Activated T-helper 1 cell treated with anti-CD3 and anti-CD28 coated beads, Interleukin-12 subunit alpha, Interleukin-12 subunit beta, Interleukin-2, Interleukin-4 antibody, amounts not matched to agents 30 ng/mL and 10 ng/mL and 1 ng/mL, durations not matched to agents 14 hours and 24 hours and 36 hours (primary cell): ENCODE measurements at regions of chr4 and their contacts with region 1.

Region 1: GRCh38 chr4:75724066-75724866 is at the start of gene USO1:
- DNase-seq: peak; percentile 100
- H3K4me3 Mint-ChIP-seq: peak within 1 kb of the TSS; percentile 96
- H3K27ac Mint-ChIP-seq: peak within 1 kb of the TSS; percentile 97
- H3K4me1 Mint-ChIP-seq: peaks cover 57% of the 10 kb centered on the region
- H3K27me3 Mint-ChIP-seq: no peaks in the 10 kb centered on the region
- total RNA-seq, gene USO1: 44.5 and 48.6 TPM in 2 replicates

Region 2: DNA sequence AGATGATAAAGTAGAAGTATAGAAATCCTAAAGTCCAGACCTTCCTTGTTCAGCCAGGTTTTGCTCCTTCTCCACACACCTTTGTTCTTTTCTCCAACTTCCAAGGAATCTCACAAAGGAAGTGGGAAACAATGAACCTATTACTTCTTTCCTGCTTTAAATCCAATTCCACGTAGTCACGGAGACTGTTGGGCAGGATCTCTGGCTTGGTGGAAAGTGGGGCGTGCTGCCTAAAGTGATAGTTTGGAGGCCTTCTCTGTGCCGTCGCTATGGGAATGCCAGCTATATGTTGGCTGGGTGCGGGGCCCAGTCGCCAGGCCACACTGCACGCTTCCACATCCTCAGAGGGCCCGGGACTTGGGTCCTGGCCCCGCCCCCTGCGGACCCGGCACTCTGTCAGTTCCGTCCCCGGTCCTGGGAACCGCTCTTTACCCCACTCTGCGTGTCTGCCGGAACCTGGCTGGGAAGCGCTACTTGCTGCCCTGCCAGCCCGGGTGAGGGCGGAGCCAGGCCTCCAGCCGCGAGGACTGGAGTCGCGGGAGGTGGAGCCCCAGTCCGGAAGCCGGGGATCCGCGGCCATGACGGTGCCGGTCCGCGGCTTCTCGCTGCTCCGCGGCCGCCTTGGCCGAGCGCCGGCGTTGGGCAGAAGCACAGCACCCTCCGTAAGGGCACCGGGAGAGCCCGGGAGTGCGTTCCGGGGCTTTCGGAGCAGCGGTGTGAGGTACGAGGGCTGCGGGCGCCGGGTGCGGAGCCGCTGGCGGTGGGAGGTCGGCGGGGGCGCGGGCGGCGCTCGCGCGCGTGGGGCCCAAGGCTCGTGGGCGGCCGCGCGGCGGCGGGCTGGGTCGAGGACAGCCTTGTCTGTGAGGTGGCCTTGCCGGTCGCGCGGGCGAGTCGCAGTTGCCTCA is 1566.5 kb before region 1 on chr4 and contains the start of gene MTHFD2L:
- intact Hi-C with region 1: loop called (anchors 10 kb)
- DNase-seq: peak; percentile 80
- H3K4me3 Mint-ChIP-seq: peak within 1 kb of the TSS; percentile 93
- H3K27ac Mint-ChIP-seq: peak within 1 kb of the TSS; percentile 87
- H3K4me1 Mint-ChIP-seq: peaks cover 30% of the 10 kb centered on the region
- H3K27me3 Mint-ChIP-seq: peaks cover 22% of the 10 kb centered on the region
- total RNA-seq, gene MTHFD2L: 8.9 and 9.9 TPM in 2 replicates

Region 3: DNA sequence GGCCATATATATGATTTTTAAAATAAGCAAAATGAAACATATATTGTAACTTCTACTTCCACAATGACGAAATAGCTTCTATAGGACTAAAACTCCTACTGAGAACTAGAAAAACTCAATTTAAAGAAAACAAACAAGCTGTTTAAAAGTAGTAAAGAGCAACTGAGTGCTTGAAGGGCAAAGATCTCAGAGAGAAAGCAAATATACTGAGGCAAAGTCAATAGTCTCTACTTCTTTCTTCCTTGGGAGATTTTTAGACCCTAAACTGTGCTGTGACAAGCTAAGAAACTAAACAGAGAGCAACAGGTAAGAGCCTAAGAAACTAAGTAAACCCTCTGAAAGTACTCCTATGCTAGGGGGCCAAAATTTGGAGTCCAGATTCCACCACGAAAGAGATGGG is 218.6 kb before region 1 on chr4:
- intact Hi-C with region 1: no loop called
- DNase-seq: no peak
- H3K4me3 Mint-ChIP-seq: no peak overlapping the region
- H3K27ac Mint-ChIP-seq: no peak overlapping the region
- H3K4me1 Mint-ChIP-seq: peaks cover 25% of the 10 kb centered on the region
- H3K27me3 Mint-ChIP-seq: no peaks in the 10 kb centered on the region

Region 4: DNA sequence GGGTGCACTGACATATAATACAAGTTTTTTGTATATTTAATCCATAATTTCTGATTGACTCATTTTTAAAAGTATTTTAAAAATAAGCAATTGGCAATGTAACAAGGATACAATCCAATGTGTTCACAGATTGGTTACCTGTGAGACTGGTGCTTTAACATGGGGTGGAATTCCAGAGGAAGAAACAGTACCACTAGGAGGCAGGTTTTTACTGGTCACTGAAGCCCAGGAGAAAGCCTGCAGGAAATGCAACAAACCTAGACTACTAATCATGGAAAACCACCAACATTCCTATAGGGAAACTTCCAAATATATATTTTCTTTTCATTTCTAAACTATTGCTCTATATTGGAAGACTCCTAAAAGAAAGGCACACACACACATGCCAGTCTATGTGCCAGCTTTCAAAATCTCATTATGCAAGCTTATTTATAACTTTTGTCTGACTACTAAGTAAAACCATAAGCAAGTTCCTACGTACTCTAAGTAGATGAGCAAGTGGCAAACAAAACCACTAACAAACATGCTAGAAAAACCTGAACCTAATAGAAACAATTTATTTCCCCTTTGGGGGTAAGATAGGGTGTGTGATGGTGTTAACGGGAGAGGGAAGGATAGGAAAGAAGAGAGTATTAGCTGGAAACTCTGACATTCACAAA is 70.3 kb before region 1 on chr4:
- intact Hi-C with region 1: loop called (anchors 1 kb)
- DNase-seq: no peak
- H3K4me3 Mint-ChIP-seq: peak overlapping the region; percentile 41
- H3K27ac Mint-ChIP-seq: peak overlapping the region; percentile 93
- H3K4me1 Mint-ChIP-seq: peaks cover 50% of the 10 kb centered on the region
- H3K27me3 Mint-ChIP-seq: no peaks in the 10 kb centered on the region

Region 5: GRCh38 chr4:75666299-75666698 is 58.0 kb before region 1 on chr4:
- intact Hi-C with region 1: no loop called
- DNase-seq: no peak
- H3K4me3 Mint-ChIP-seq: peak overlapping the region; percentile 22
- H3K27ac Mint-ChIP-seq: no peak overlapping the region
- H3K4me1 Mint-ChIP-seq: peaks cover 71% of the 10 kb centered on the region
- H3K27me3 Mint-ChIP-seq: no peaks in the 10 kb centered on the region

Region 6: GRCh38 chr4:75708218-75708691 is 16.0 kb before region 1 on chr4:
- intact Hi-C with region 1: loop called (anchors 1 kb)
- DNase-seq: peak; percentile 38
- H3K4me3 Mint-ChIP-seq: no peak overlapping the region
- H3K27ac Mint-ChIP-seq: no peak overlapping the region
- H3K4me1 Mint-ChIP-seq: peaks cover 8% of the 10 kb centered on the region
- H3K27me3 Mint-ChIP-seq: no peaks in the 10 kb centered on the region

Region 7: GRCh38 chr4:75989846-75990528 is 265.7 kb after region 1 on chr4:
- intact Hi-C with region 1: loop called (anchors 2 kb)
- DNase-seq: no peak
- H3K4me3 Mint-ChIP-seq: peak overlapping the region; percentile 93
- H3K27ac Mint-ChIP-seq: peak overlapping the region; percentile 83
- H3K4me1 Mint-ChIP-seq: peaks cover 27% of the 10 kb centered on the region
- H3K27me3 Mint-ChIP-seq: no peaks in the 10 kb centered on the region

Region 8: DNA sequence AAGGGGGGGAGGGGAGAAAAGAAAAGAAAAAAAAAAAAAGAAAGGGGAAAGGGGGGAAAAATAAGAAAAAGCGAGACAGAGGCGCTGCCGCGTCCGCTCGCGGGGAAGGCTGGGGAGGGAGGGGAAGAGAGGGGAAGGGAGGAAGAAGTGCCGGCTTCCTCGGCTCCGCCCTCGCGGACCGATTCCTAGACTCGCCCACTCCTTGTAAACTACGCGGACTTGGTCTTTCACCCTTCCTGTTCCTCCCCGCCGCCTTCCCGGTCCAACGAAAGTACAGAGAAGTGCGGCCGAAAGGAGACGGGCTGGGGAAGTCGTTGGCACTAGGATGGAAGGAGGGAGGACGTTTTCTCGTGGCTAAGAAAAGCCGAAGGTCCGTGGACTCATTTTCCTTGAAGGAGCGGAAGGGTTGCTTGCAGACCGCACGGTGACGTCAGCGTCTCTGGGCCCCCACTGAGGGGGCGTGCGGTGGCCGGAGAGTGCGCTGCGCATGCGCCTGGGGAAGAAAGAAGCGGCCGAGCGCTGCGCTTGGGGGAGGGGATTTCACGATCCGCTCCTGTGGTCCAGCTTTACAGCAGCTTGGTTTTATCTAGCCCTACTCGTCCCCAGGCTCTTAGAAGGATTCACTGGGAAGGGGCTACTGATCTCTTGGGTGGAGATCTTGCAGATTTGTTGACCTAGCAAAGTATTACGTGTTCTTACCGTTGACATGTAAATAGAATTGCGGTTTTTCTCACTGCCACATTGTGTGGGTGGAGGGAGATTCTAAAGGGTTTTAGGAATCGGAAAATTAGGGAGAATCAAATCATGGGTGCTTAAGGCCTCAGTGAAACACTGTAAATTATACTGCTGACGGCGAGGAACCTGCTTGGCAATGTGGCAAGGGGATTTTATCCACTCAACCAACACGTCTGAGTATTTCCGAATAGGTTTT is 1351.9 kb after region 1 on chr4 and contains the start of gene CCNI:
- intact Hi-C with region 1: loop called (anchors 2 kb)
- DNase-seq: peak; percentile 91
- H3K4me3 Mint-ChIP-seq: peak within 1 kb of the TSS; percentile 96
- H3K27ac Mint-ChIP-seq: peak within 1 kb of the TSS; percentile 100
- H3K4me1 Mint-ChIP-seq: peaks cover 42% of the 10 kb centered on the region
- H3K27me3 Mint-ChIP-seq: peaks cover 4% of the 10 kb centered on the region
- total RNA-seq, gene CCNI: 236 and 253 TPM in 2 replicates